ENCODE measurements at regions of chr3 and their contacts with region 1.

Region 1: GRCh38 chr3:198061119-198062067 is 101.4 kb downstream of the LMLN start:
- H3K4me3 Mint-ChIP-seq: no peak overlapping the region
- H3K27ac Mint-ChIP-seq: no peak overlapping the region
- H3K4me1 Mint-ChIP-seq: no peaks in the 10 kb centered on the region
- H3K27me3 Mint-ChIP-seq: peaks cover 6% of the 10 kb centered on the region

Region 2: DNA sequence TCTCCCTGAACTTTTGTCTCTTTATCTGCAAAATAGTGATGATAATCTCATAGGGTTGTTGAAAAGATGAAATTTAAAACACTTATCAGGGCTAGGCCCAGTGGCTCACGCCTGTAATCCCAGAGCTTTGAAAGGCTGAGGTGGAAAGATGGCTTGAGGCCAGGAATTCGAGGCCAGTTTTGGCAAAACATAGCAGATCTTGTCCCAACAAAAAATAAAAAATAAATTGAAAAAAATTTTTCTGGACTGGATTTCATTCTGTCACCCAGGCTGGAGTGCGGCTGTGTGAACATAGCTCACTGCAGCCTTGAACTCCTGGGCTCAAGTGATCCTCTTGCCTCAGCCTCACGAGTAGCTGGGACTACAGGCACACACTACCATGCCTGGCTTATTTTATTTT is 71.7 kb before region 1 on chr3:
- intact Hi-C with region 1: loop called (anchors 10 kb)
- H3K4me3 Mint-ChIP-seq: no peak overlapping the region
- H3K27ac Mint-ChIP-seq: no peak overlapping the region
- H3K4me1 Mint-ChIP-seq: peaks cover 6% of the 10 kb centered on the region
- H3K27me3 Mint-ChIP-seq: no peaks in the 10 kb centered on the region